PC-3 (cell line): ENCODE measurements at regions of chr11 and their contacts with region 1.

Region 1: DNA sequence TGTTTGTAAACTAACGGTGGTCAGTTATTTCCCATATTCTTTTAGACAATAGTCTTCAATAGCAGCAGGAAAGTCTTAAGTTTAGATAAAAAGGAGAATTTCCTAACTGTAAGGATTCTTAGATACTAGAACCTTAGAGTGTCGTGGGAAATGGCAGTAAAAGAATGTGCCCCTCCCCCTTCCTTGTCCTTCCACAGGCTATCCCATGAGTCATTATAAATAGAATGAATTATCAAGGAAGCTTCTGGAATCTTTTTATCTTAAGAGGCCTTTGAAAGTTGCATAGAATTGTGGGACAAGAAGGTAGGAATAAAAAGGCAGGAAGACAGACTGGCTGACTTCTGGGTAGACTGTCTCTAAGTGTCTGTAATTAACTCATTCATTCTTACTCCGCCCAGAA is 165.2 kb upstream of the TBCEL start:
- DNase-seq: peak; percentile 19
- ATAC-seq: no peak
- H3K4me3 ChIP-seq: no peak overlapping the region
- H3K27ac ChIP-seq: no peak overlapping the region
- H3K4me1 ChIP-seq: peaks cover 3% of the 10 kb centered on the region; the same call in 1 of the 2 replicates
- H3K27me3 ChIP-seq: peaks cover 43% of the 10 kb centered on the region
- CTCF ChIP-seq: no peak

Region 2: DNA sequence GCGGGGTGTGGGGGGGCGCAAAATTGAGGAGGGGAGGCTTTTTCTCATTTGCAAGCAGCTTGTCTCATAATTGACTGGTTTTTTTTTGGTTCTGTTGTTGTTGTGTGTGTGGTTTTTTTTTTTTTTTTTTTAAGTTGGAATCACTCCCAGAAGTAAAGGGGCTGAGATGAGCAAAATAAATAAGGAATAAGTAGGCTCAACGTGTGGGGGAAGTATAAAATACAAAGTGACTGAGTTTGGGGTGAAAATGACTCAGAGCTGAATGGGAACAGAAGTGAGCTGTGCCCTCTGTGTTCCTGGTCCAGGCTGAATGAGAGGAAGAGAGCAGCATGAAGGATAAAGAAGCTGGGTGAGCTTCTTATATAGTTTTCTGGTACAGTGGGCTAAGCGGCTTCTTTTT is 257.2 kb before region 1 on chr11:
- CTCF ChIA-PET with region 1: no interaction called
- POLR2A ChIA-PET with region 1: no interaction called
- intact Hi-C with region 1: no loop called
- DNase-seq: peak; percentile 12
- ATAC-seq: no peak
- H3K4me3 ChIP-seq: no peak overlapping the region
- H3K27ac ChIP-seq: no peak overlapping the region
- H3K4me1 ChIP-seq: no peaks in the 10 kb centered on the region
- H3K27me3 ChIP-seq: peaks cover 77% of the 10 kb centered on the region
- CTCF ChIP-seq: no peak

Region 3: DNA sequence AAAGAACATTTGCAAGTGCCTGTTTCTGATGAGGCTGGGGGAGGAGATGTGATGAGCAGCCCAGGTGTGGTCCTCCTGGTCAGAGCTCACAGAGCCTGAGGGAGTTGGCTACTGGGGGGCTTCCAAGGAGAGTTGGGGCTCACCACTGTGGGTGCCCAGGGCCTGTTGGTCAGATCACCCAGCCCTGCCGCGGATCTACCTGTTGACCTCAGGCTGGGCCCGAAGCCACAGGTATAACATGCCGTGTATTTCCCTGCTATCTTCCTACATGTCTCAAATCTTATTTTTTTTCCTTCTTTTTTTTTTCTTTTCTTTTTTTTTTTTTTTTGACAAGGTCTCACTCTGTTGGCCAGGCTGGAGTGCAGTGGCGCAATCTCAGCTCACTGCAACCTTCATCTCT is 34.5 kb before region 1 on chr11:
- CTCF ChIA-PET with region 1: no interaction called
- POLR2A ChIA-PET with region 1: interaction called, 11 read pairs
- intact Hi-C with region 1: no loop called
- DNase-seq: no peak
- ATAC-seq: no peak
- H3K4me3 ChIP-seq: no peak overlapping the region
- H3K27ac ChIP-seq: no peak overlapping the region
- H3K4me1 ChIP-seq: no peaks in the 10 kb centered on the region
- H3K27me3 ChIP-seq: peaks cover 74% of the 10 kb centered on the region
- CTCF ChIP-seq: no peak